ENCODE measurements at regions of chr6 and their contacts with region 1.

Region 1: GRCh38 chr6:16761471-16762267 is 409 bp upstream of the ATXN1 start:
- DNase-seq: no peak
- H3K4me3 ChIP-seq: peak overlapping the region; percentile 77
- CTCF ChIP-seq: peak; percentile 36

Region 2: GRCh38 chr6:16337295-16337975 is 424.2 kb before region 1 on chr6:
- CTCF ChIA-PET with region 1: interaction called, 26 read pairs
- POLR2A ChIA-PET with region 1: no interaction called
- DNase-seq: no peak
- H3K4me3 ChIP-seq: no peak overlapping the region
- CTCF ChIP-seq: no peak

Region 3: DNA sequence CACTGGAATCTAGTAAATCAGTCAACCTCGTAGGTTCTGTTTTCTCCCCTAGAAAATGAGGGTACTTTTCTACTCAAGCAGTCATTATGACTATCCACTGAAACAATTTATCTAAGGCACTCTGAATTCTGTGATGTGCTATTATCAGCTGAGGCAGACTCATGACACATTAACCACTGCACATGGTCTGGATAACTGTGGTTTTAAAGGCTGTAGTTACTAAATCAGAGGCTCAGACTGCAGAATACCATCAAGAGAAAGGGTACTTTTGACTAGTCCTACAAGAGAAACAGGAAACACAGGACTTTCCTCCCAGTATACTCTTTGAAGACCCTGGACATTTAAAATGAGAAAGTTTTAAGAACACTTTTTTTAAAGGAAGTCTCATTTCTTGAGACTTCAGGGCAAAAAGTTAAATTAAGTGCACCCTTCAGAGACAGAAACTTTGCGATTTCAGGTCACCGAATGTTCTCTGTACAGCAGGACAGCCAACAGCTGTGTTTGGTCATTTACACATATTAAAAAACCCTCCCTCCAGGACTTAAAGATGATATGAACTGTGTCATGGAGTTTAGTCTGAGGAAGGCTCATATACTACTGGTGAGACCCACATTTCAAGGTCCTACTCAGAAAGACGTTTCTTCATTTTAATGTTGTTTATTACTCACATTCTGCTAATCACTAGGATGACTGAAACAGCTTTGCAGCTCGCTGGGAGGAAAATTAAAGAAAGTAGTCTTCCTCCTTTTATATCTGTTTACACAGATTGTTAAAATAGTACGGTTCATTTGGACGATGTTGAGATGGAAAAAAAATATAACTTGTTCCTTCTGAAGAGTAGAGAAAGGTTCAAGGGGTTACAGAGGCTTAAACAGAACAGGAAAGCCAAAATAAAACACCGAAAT is 20.3 kb before region 1 on chr6:
- CTCF ChIA-PET with region 1: interaction called, 35 read pairs
- POLR2A ChIA-PET with region 1: interaction called, 15 read pairs
- DNase-seq: peak; percentile 93
- H3K4me3 ChIP-seq: no peak overlapping the region; the same call in 1 of the 2 replicates
- CTCF ChIP-seq: no peak

Region 4: DNA sequence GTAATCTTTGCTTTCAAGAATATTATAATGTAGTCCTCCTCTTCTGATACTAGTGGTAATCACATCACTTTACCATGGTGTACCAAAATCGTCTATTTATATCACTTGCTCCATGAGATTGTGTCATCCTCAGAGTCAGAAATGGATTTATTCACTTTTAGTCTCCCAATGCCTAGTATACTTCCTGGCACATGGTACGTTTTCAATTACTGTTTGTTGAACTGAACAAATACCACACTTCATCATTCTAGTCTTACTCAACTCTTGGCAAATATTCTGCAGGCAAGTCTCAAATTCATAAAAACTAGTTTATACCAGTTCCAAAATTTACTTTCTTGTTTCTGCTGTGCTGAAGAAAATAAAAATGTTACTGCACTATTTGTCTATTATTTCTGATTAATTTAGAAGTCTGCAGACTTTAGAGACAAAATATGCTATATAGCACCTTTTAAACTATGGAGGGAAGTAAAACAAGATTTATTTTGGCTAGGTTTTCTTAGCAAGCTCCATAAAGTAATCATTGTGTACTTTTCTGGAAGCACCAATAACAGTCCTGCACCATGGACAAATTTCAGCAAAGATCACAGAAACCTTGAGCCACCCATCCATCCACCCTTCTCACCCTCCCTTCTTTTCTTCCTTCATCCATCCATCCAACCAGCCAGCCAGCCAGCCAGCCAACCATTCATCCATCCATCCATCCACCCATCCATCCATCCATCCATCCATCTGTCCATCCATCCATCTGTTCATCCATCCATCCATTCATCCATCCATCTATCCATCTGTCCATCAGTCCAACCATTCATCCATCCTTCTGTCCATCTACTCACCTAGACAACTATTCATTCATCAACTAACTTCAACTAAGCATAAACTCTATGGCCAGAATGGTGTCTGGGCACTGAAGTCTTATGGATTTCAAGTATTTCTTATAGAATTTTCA is 238.1 kb after region 1 on chr6:
- CTCF ChIA-PET with region 1: interaction called, 37 read pairs
- POLR2A ChIA-PET with region 1: no interaction called
- DNase-seq: peak; percentile 71
- H3K4me3 ChIP-seq: no peak overlapping the region
- CTCF ChIP-seq: no peak

Region 5: DNA sequence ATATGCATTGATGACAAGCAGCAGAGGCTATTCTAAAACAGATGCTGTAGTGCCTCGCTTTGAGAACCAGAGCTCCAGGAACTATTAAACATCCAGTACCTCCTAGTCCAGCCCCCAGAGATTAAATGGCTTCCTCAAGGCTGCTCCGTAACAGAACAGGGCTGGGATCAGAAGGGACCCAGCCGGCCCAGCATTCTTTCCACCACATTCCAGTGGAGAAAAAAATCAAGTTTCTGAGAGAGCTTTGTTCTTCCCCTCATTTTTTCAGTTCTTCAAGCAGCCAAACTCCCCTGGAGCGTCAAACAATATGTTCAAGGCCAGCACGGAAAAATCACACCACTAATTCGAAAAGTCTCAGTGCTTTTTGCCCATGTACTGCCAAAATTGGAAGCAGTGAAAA is 334.4 kb after region 1 on chr6:
- CTCF ChIA-PET with region 1: interaction called, 150 read pairs
- POLR2A ChIA-PET with region 1: no interaction called
- DNase-seq: no peak
- H3K4me3 ChIP-seq: no peak overlapping the region
- CTCF ChIP-seq: no peak